GM13976 (cell line): ENCODE measurements at regions of chr16 and their contacts with region 1.

Region 1: GRCh38 chr16:19179546-19180490 is 11.8 kb downstream of the SYT17 start:
- DNase-seq: peak; percentile 85
- CTCF ChIP-seq: peak; percentile 62

Region 2: GRCh38 chr16:19375561-19376158 is 195.8 kb after region 1 on chr16:
- in situ Hi-C with region 1: loop called (anchors 10 kb)
- DNase-seq: peak; percentile 72
- CTCF ChIP-seq: peak; percentile 55

Region 3: DNA sequence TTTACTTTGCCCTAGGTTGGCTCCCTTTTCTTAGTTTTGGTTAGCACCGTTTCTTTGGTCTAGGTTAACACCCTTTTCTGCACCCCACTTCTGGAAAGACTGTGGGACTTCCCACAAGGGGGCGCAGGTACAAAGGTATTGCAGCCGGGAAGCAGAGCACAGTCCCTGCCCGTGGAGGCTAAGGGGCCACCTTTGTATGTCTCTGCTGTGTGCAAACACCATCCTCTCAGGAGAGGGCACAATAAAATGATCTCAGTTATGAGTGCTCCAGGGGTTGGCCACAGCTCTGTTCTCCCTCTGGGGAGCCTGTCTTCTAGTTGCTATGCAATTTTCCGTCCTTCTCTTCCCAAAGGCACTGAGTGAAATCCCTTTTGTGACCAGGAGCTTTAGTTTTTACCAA is 209.4 kb after region 1 on chr16:
- in situ Hi-C with region 1: no loop called
- DNase-seq: peak; percentile 55
- CTCF ChIP-seq: peak; percentile 66

Region 4: DNA sequence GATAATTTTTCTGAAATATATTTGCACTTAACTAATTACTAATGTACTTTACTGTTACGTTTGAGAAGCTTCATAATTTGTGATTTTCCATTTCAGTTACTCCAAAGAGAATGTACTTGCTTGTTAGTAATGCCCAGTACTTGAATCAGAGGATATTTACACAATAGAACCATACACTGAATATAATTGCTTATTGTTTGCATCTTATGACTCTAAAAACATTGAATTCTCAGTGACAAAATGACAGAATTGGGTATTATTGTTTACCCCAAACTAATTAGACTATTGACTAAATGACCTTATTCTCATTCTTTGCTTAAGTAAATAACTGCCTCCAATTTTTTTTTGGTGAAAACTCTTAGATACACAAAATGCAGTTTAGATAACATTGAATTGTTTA is 352.8 kb after region 1 on chr16:
- in situ Hi-C with region 1: no loop called
- DNase-seq: no peak
- CTCF ChIP-seq: no peak